Endothelial cell of umbilical vein (primary cell): ENCODE measurements at regions of chr10 and their contacts with region 1.

Region 1: DNA sequence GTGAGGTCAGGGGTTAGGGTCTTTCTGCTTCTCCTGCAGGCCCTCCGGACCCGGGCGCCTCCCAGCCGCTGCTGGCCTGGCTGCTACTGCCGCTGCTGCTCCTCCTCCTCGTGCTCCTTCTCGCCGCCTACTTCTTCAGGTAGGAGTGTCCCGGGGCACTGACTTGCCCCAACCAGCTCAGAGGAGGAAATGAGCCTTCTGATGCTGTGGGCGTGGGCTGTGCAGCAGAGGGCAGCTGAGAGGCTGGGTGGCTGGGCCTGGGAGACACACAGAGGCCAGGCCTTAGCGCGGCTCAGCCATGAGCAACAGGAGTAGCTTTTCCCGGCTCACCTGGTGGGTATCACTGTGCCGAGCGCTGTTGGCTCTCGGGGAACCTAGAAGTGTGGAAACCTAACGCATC is 78.9 kb downstream of the MKI67 start:
- DNase-seq: peak; percentile 80
- H3K4me3 ChIP-seq: no peak overlapping the region
- H3K27ac ChIP-seq: peak overlapping the region; percentile 58
- H3K4me1 ChIP-seq: peaks cover 17% of the 10 kb centered on the region
- H3K27me3 ChIP-seq: no peaks in the 10 kb centered on the region
- CTCF ChIP-seq: no peak
- POLR2A ChIP-seq: peak; percentile 28

Region 2: DNA sequence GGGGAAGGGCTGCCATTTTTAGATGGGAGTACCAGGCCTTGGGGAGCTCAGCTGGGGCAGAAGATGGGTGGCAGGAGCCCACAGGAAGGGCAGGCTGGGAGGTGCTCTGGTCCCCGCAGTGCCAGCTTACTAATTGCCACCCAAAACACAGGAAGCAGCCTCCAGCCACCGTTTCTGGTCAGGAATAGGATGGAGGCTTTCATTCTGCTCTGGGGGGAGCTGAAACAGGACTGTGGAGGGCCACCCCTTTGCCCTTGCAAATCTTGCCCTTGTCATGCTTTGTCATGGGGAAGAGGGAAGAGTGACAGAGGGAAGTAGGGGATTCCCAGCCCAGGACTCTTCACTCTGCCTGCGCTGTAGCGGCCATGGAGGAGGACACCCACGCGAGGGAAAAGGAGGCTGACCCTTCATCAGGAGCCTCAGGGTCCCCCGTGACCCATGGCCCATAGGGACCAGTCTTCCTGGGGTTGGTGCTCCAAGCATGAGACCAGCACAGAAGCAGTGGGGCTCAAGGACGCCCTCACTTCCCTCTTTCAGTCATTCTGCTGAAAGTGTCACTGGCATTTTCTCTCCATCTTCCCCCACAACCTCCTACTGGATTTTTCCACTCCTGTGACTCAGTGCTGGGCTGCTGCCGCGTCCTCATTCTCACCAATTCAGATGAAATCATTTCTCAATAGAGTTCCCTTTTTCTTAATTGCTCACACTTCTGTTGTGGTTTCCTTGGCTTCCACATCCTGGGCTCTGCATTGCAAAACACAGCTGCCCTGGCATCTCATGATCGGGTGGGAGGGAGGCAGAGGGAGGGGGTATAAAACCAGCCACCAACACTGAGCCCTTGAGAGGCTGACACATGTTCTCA is 17.0 kb after region 1 on chr10:
- CTCF ChIA-PET with region 1: interaction called, 25 read pairs
- POLR2A ChIA-PET with region 1: no interaction called
- dilution Hi-C with region 1: no loop called
- intact Hi-C with region 1: loop called (anchors 1 kb)
- DNase-seq: no peak
- H3K4me3 ChIP-seq: no peak overlapping the region
- H3K27ac ChIP-seq: no peak overlapping the region
- H3K4me1 ChIP-seq: peaks cover 28% of the 10 kb centered on the region
- H3K27me3 ChIP-seq: no peaks in the 10 kb centered on the region
- CTCF ChIP-seq: no peak
- POLR2A ChIP-seq: no peak